Sigmoid colon (tissue), 7 donors: ENCODE measurements at regions of chr10 and their contacts with region 1.

Region 1: DNA sequence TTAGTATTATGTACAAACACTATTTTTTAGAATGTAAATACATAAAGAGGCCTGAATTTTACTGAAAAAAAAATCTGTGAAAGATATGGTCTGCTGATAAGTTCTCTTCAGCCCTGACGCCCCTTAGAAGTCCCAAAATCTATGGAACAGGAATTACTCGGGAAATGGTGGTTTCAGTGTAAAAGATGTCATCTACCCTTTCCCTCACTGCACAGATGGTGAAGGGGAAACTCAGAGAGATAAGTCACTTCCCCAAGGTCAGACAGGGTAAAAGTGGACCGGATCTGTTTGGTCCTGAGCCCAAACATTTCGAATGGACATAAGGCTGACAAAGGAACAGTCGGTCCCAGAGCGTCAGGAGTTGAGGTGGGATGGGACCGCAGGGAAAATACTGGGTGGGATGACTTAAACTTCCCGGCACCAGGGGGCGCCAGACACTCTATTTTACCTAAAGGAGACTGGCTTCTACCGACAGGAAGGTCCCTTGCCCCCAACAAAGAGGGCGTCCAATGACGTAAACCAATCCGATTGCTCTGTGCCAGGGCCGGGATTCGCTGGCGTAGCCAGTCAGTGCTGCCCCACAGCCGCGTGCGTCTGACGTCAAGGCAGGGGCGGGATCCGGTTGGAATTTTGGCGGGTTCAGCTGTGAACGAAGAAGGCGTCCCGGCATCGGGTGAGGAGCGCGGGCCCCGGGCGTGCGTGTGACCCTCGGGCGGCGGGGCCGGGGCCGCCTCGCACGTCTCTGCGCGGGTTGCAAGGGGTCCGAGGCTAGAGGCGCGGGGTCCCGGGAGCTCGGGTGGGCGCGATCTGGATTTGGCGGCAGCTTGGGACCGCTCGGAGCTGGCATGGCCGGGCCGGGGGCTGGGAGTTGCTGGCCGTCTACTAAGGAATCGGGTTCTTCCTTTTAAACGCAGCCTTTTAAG is at the start of gene MCM10:
- DNase-seq: peak; percentile 99
- H3K4me3 ChIP-seq: peak within 1 kb of the TSS in 3 of 4 donors; percentile 36 to 50 (median 46)
- H3K27ac ChIP-seq: peak within 1 kb of the TSS in 1 of 4 donors; percentile 28
- H3K4me1 ChIP-seq: peaks cover 0 to 15% (median 14%) of the 10 kb centered on the region in 4 donors
- H3K27me3 ChIP-seq: no peaks in the 10 kb centered on the region
- CTCF ChIP-seq: peak; percentile 81 to 95 (median 86)
- EP300 ChIP-seq: peak in 3 of 4 donors; percentile 38 to 56 (median 48)
- POLR2A ChIP-seq: no peak
- total RNA-seq, gene MCM10: 0.14 to 0.83 (median 0.36) TPM in 3 of 4 donors, not detected in the other

Region 2: GRCh38 chr10:13299437-13300287 is 138.5 kb after region 1 on chr10 and contains the start of gene PHYH:
- intact Hi-C with region 1: loop called (anchors 1 kb)
- DNase-seq: peak; percentile 97
- H3K4me3 ChIP-seq: peak within 1 kb of the TSS; percentile 74 to 95 (median 90)
- H3K27ac ChIP-seq: peak within 1 kb of the TSS; percentile 100
- H3K4me1 ChIP-seq: peaks cover 0 to 35% (median 19%) of the 10 kb centered on the region in 4 donors
- H3K27me3 ChIP-seq: no peaks in the 10 kb centered on the region
- CTCF ChIP-seq: no peak
- EP300 ChIP-seq: peak in 1 of 4 donors; percentile 60
- POLR2A ChIP-seq: peak; percentile 50 to 70
- total RNA-seq, gene PHYH: 39.9 to 48.1 (median 41.6) TPM

Region 3: GRCh38 chr10:13440185-13441061 is 279.2 kb after region 1 on chr10:
- intact Hi-C with region 1: loop called (anchors 2 kb)
- DNase-seq: peak; percentile 66
- H3K4me3 ChIP-seq: peak overlapping the region in 3 of 4 donors; percentile 19 to 38 (median 37)
- H3K27ac ChIP-seq: no peak overlapping the region
- H3K4me1 ChIP-seq: peaks cover 0 to 15% (median 14%) of the 10 kb centered on the region in 4 donors
- H3K27me3 ChIP-seq: peaks cover 0 to 27% (median 7%) of the 10 kb centered on the region in 3 donors
- CTCF ChIP-seq: peak; percentile 39 to 76 (median 70)
- EP300 ChIP-seq: no peak
- POLR2A ChIP-seq: no peak

Region 4: GRCh38 chr10:13528875-13529713 is 367.9 kb after region 1 on chr10 and contains the start of gene BEND7:
- intact Hi-C with region 1: loop called (anchors 2 kb)
- DNase-seq: no peak
- H3K4me3 ChIP-seq: peak within 1 kb of the TSS; percentile 55 to 72 (median 68)
- H3K27ac ChIP-seq: peak within 1 kb of the TSS; percentile 81 to 91 (median 86)
- H3K4me1 ChIP-seq: peaks cover 0 to 31% (median 24%) of the 10 kb centered on the region in 4 donors
- H3K27me3 ChIP-seq: no peaks in the 10 kb centered on the region
- CTCF ChIP-seq: no peak
- EP300 ChIP-seq: no peak
- POLR2A ChIP-seq: no peak
- total RNA-seq, gene BEND7: 11.8 to 27.2 (median 24.0) TPM